ENCODE measurements at regions of chr9 and their contacts with region 1.

Region 1: DNA sequence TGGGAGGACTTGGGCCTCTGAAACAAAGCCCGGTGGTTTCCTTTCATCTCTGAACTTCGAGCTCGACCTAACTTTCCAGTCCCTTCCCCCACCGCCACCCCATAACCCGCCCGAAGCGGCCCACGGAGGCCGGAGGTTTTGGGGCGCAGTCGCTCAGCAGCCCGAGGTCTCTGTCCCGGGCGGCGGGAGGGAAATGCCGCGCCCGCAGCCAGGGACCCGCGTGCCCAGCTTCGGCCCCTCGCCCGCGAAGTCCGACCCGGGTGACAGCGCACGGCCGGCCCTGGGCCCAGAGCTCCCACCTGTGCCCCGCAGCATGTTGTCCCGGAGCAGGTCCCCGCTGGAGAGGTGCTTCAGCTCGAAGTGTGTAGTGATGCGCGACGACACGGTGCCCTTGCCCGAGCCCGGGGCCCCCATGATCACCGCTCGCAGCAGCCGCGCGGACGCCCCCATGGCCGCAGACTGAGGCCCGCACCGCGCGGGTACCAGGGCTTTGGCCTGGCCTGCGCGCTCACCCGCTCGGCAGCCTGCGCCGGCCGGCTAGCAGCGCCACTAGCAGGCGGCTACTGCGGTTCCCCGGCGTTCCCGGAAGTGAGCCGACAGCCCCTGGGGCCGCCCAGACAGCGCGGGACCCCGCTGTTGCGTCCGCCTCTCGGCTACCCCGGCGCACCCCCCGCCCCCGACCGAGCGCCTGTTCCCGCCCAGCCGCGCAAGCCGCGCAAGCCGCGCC is at the start of gene AK3:
- DNase-seq: peak; percentile 81 to 93 (median 86)
- ATAC-seq: peak; percentile 90 to 93
- H3K4me3 Mint-ChIP-seq: peak within 1 kb of the TSS; percentile 85 to 99 (median 94)
- H3K27ac Mint-ChIP-seq: peak within 1 kb of the TSS; percentile 90 to 99 (median 96)
- H3K4me1 Mint-ChIP-seq: peaks cover 15 to 46% (median 41%) of the 10 kb centered on the region in 4 donors
- H3K27me3 Mint-ChIP-seq: no peaks in the 10 kb centered on the region
- polyA plus RNA-seq, gene AK3: 41.6 to 58.8 (median 46.1) TPM

Region 2: DNA sequence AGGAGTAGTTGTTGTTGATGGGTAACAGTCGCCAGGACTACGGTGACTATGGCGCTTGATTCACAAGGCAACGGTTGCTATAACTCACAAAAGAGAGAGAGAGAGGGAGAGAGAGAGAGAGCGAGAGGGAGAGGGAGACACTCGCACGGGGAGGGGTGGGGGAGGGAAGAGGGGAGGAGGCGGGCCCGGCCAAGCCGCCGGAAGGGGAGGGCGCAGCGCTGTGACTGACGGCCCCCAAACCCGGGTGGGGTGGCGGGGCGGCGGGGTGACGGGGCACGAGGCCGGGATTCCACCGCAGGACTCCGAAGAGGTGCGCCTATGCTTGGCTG is 1215.0 kb before region 1 on chr9 and contains the start of gene RFX3:
- POLR2A ChIA-PET with region 1: interaction called, 16 read pairs
- DNase-seq: peak in 9 of 10 donors; percentile 90 to 96 (median 91)
- ATAC-seq: peak; percentile 53 to 61
- H3K4me3 Mint-ChIP-seq: peak within 1 kb of the TSS; percentile 86 to 99 (median 94)
- H3K27ac Mint-ChIP-seq: peak within 1 kb of the TSS; percentile 97 to 100 (median 99)
- H3K4me1 Mint-ChIP-seq: peaks cover 25 to 67% (median 61%) of the 10 kb centered on the region in 4 donors
- H3K27me3 Mint-ChIP-seq: peaks cover 0 to 5% (median 0%) of the 10 kb centered on the region in 5 donors
- polyA plus RNA-seq, gene RFX3: 4.1 to 4.5 (median 4.2) TPM

Region 3: GRCh38 chr9:4667681-4668080 is 73.1 kb before region 1 on chr9:
- POLR2A ChIA-PET with region 1: interaction called, 42 read pairs
- DNase-seq: peak in 6 of 10 donors; percentile 30 to 71 (median 62)
- ATAC-seq: peak; percentile 75 to 78
- H3K4me3 Mint-ChIP-seq: peak overlapping the region; percentile 0 to 99 (median 64)
- H3K27ac Mint-ChIP-seq: peak overlapping the region; percentile 5 to 95 (median 86)
- H3K4me1 Mint-ChIP-seq: peaks cover 32 to 78% (median 64%) of the 10 kb centered on the region in 4 donors
- H3K27me3 Mint-ChIP-seq: no peaks in the 10 kb centered on the region

Region 4: DNA sequence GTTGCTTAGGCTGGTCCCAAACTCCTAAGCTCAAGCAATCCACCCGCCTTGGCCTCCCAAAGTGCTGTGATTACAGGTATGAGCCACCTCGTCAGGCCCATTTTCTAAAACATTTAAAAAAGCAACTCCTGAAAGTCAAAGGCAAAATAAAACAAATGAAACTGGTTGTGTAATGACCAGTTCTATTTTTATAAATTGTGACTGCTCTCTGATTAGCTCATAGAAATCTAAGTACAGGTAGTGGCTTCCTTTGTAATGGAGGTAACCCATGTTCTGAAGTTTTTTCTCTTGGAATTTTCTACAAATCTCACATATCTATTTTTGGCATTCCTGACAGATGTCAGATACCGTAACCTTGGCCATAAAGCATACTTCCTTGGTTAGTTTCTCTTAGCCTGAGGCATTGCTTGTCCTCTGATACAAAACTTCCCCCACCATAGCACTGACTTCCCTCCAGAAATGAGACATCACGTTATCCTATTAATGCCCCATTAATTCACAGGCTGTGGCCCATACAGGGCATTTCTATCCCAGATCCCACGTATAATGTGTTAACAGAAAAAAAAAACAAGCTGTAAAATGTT is 14.3 kb after region 1 on chr9:
- POLR2A ChIA-PET with region 1: interaction called, 11 read pairs
- DNase-seq: no peak
- ATAC-seq: no peak
- H3K4me3 Mint-ChIP-seq: no peak overlapping the region
- H3K27ac Mint-ChIP-seq: no peak overlapping the region
- H3K4me1 Mint-ChIP-seq: peaks cover 1 to 5% (median 3%) of the 10 kb centered on the region in 4 donors
- H3K27me3 Mint-ChIP-seq: peaks cover 0 to 8% (median 0%) of the 10 kb centered on the region in 5 donors

Region 5: GRCh38 chr9:4805191-4805918 is 64.6 kb after region 1 on chr9:
- POLR2A ChIA-PET with region 1: no interaction called
- DNase-seq: no peak
- ATAC-seq: no peak
- H3K4me3 Mint-ChIP-seq: peak overlapping the region in 1 of 10 donors; percentile 22
- H3K27ac Mint-ChIP-seq: peak overlapping the region in 1 of 10 donors; percentile 72
- H3K4me1 Mint-ChIP-seq: peaks cover 22 to 39% (median 28%) of the 10 kb centered on the region in 4 donors
- H3K27me3 Mint-ChIP-seq: no peaks in the 10 kb centered on the region

Region 6: GRCh38 chr9:4984621-4985385 is 244.0 kb after region 1 on chr9 and contains the start of gene JAK2:
- POLR2A ChIA-PET with region 1: interaction called, 10 read pairs
- DNase-seq: peak; percentile 60 to 88 (median 74)
- ATAC-seq: peak; percentile 75 to 83
- H3K4me3 Mint-ChIP-seq: peak within 1 kb of the TSS; percentile 88 to 98 (median 94)
- H3K27ac Mint-ChIP-seq: peak within 1 kb of the TSS; percentile 65 to 96 (median 92)
- H3K4me1 Mint-ChIP-seq: peaks cover 15 to 32% (median 26%) of the 10 kb centered on the region in 4 donors
- H3K27me3 Mint-ChIP-seq: no peaks in the 10 kb centered on the region
- polyA plus RNA-seq, gene JAK2: 1.9 to 4.8 (median 3.8) TPM

Measured in naive thymus-derived CD8-positive, alpha-beta T cell (primary cell).